Calu3 (cell line): ENCODE measurements at regions of chr10 and their contacts with region 1.

Region 1: GRCh38 chr10:71771821-71772617 is 1.3 kb downstream of the VSIR start:
- DNase-seq: peak; percentile 60
- H3K4me3 Mint-ChIP-seq: peak overlapping the region; percentile 87
- H3K27ac Mint-ChIP-seq: no peak overlapping the region
- H3K4me1 Mint-ChIP-seq: peaks cover 47% of the 10 kb centered on the region
- H3K27me3 Mint-ChIP-seq: no peaks in the 10 kb centered on the region
- CTCF ChIP-seq: no peak

Region 2: GRCh38 chr10:71708301-71708703 is 63.7 kb before region 1 on chr10:
- CTCF ChIA-PET with region 1: interaction called, 18 read pairs
- intact Hi-C with region 1: no loop called
- DNase-seq: peak; percentile 73
- H3K4me3 Mint-ChIP-seq: no peak overlapping the region
- H3K27ac Mint-ChIP-seq: no peak overlapping the region
- H3K4me1 Mint-ChIP-seq: peaks cover 4% of the 10 kb centered on the region
- H3K27me3 Mint-ChIP-seq: peaks cover 2% of the 10 kb centered on the region
- CTCF ChIP-seq: peak; percentile 93

Region 3: GRCh38 chr10:72107325-72108003 is 335.4 kb after region 1 on chr10:
- CTCF ChIA-PET with region 1: no interaction called
- intact Hi-C with region 1: no loop called
- DNase-seq: peak; percentile 48
- H3K4me3 Mint-ChIP-seq: no peak overlapping the region
- H3K27ac Mint-ChIP-seq: peak overlapping the region; percentile 74
- H3K4me1 Mint-ChIP-seq: peaks cover 72% of the 10 kb centered on the region
- H3K27me3 Mint-ChIP-seq: no peaks in the 10 kb centered on the region
- CTCF ChIP-seq: no peak